ENCODE measurements at regions of chr2 and their contacts with region 1.

Region 1: GRCh38 chr2:169397697-169398096 is 35.4 kb upstream of the LRP2 start:
- DNase-seq: peak in 2 of 9 experiments; percentile 6 to 8
- ATAC-seq: no peak
- H3K4me3 ChIP-seq: no peak overlapping the region
- H3K4me3 Mint-ChIP-seq: no peak overlapping the region
- H3K27ac ChIP-seq: no peak overlapping the region
- H3K27ac Mint-ChIP-seq: no peak overlapping the region
- H3K4me1 ChIP-seq: no peaks in the 10 kb centered on the region
- H3K4me1 Mint-ChIP-seq: no peaks in the 10 kb centered on the region
- H3K27me3 ChIP-seq: no peaks in the 10 kb centered on the region
- H3K27me3 Mint-ChIP-seq: peaks cover 20% of the 10 kb centered on the region
- CTCF ChIP-seq: no peak

Region 2: DNA sequence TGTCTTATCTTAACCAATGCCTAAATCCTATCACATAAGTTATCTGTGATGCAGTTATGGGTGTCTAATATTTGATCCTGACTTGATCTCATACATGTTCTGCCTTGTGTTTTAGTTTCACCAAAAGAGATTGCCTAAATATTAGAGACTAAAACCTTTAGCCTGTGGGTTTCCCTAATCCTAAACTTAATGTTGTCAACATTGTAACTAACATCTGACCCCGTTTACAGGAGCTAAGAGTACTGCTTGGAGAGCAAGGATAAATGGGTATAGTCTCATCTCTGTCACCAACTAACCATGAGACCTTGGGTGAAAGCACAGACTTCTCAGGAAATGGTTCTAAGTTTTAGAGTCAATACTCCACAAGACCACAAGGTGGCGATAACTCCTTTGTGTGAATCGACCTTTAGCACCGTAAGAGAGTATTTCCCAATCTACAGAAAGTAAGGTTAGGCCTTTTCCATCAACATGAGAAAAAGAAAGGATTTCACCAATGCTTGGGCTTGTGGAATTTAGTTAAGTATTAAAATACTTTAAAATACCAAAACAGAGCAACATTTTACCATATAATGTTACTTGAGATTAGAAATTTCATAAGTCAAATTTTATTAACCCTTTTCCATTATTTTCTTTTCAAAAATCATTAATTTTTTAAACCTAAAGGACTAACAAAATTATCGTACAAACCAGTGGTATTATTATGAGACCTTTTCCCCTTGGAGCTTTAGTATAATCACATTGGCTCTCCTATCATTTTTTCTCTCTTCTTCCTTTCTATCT is 436.1 kb before region 1 on chr2:
- CTCF ChIA-PET with region 1: no interaction called
- POLR2A ChIA-PET with region 1: no interaction called
- intact Hi-C with region 1: loop called in 1 of 2 experiments (anchors 5 kb)
- DNase-seq: peak in 7 of 9 experiments; percentile 3 to 79 (median 28)
- ATAC-seq: peak; percentile 88
- H3K4me3 ChIP-seq: no peak overlapping the region
- H3K4me3 Mint-ChIP-seq: no peak overlapping the region
- H3K27ac ChIP-seq: no peak overlapping the region
- H3K27ac Mint-ChIP-seq: no peak overlapping the region
- H3K4me1 ChIP-seq: peaks cover 15% of the 10 kb centered on the region
- H3K4me1 Mint-ChIP-seq: peaks cover 34% of the 10 kb centered on the region
- H3K27me3 ChIP-seq: no peaks in the 10 kb centered on the region
- H3K27me3 Mint-ChIP-seq: no peaks in the 10 kb centered on the region
- CTCF ChIP-seq: peak; percentile 91

Region 3: DNA sequence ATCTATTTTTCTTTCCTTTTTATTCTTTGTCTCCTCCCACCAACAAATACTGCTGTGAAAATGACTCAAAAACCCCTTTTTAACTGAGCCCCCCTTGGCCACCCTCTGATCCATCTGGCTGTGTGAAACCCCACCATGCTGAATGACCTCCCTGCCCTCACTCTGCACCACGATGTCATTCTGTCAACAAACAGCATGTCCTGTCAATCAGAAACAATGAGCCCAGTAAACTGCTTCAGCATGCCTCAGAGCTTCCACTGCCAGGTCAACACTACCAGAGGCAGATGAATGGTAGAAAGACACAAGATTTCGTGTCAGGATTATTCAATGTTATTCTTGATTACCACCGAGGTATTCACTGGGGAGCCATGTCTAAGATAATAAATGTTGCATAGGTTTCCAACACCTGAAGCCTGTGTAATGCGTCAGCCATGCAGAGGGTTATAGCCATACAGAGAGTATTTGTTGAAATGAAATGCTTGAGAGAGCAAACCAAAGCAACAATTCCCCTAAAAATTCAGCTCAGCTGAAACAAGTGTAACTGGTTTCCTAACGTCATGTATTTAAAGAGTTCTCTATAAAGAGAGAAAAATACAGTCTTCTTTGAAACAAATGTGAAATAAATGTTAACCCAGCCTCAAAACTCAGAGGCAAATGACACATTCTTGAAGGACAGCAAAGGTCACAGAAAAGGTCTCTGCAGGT is 112.0 kb before region 1 on chr2:
- CTCF ChIA-PET with region 1: no interaction called
- POLR2A ChIA-PET with region 1: no interaction called
- intact Hi-C with region 1: no loop called
- DNase-seq: no peak
- ATAC-seq: no peak
- H3K4me3 ChIP-seq: no peak overlapping the region
- H3K4me3 Mint-ChIP-seq: no peak overlapping the region
- H3K27ac ChIP-seq: no peak overlapping the region
- H3K27ac Mint-ChIP-seq: no peak overlapping the region
- H3K4me1 ChIP-seq: no peaks in the 10 kb centered on the region
- H3K4me1 Mint-ChIP-seq: no peaks in the 10 kb centered on the region
- H3K27me3 ChIP-seq: no peaks in the 10 kb centered on the region
- H3K27me3 Mint-ChIP-seq: peaks cover 13% of the 10 kb centered on the region
- CTCF ChIP-seq: no peak